ENCODE measurements at regions of chr11 and their contacts with region 1.

Region 1: DNA sequence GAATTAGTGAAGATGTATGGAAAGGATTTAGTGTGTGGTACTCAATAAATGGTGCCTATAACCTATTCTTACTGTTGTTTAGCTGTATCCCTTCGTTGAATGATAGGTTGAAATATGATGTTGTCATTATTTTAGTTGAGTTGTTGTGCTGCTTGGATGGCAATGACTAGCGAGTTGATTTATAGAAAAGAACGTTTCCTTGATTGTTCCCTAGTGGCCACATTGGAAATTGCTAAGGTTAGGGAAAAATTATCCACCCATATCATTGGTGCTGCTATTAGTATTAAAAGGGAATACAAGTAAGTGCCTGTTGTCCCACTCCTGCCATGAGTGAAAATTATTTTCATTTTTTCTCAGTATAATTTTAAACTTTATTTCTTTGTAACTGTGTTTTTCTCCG is 14.5 kb downstream of the EMSY start:
- DNase-seq: peak; percentile 30 to 41
- ATAC-seq: peak; percentile 24 to 70; a peak in 3 of 6 replicates
- H3K4me3 ChIP-seq: no peak overlapping the region
- H3K27ac ChIP-seq: no peak overlapping the region
- H3K4me1 ChIP-seq: peaks cover 10% of the 10 kb centered on the region; the same call in 1 of the 3 replicates
- CTCF ChIP-seq: peak; percentile 33
- EP300 ChIP-seq: no peak
- POLR2A ChIP-seq: no peak
- RAD21 ChIP-seq: no peak

Region 2: DNA sequence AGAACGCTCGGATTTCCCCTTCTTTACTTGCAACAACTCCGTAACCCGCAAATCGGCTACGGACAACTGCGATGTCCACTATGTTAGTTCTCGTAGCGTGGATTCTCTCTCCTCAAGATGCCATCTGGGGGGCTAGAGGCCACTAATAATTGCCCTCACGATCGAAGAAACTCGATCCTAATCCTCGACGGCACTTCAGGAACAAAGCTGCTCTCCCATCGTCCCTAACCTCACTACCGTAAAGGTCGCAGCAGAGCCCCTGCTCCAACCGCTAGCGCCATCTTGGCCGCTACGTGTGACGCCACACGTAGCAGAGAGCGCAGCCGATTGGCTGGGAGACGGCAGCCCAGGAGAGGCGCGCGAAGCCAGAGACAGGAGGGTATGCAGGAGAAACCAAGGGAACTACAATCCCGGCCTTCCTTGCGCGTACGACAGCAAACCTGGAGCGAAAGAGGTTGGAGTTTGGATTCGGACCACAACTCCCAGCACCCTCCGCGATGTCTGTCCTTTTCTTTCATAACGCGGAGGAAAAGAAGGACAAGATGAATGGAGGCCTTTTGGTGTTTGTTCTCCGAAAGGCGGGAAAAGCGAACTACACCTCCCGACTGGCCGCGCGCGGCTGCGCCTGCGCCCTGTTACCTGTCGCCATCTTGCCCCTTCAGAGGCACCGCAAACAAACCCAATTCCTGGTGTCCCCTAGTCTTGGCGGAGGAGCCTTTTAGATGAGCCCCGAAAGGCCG is 14.7 kb before region 1 on chr11 and contains the start of gene EMSY:
- CTCF ChIA-PET with region 1: interaction called, 15 read pairs
- POLR2A ChIA-PET with region 1: interaction called, 3 read pairs
- DNase-seq: peak; percentile 94 to 99
- ATAC-seq: peak; percentile 96 to 97
- H3K4me3 ChIP-seq: peak within 1 kb of the TSS; percentile 95
- H3K27ac ChIP-seq: peak within 1 kb of the TSS; percentile 90 to 91
- H3K4me1 ChIP-seq: peaks cover 12% of the 10 kb centered on the region; the same call in 2 of the 3 replicates
- CTCF ChIP-seq: no peak
- EP300 ChIP-seq: no peak
- POLR2A ChIP-seq: peak; percentile 97
- RAD21 ChIP-seq: no peak
- polyA plus RNA-seq, gene EMSY: 23.0 and 23.6 TPM in 2 replicates

Region 3: GRCh38 chr11:76602431-76602861 is 143.1 kb after region 1 on chr11:
- CTCF ChIA-PET with region 1: no interaction called
- POLR2A ChIA-PET with region 1: no interaction called
- DNase-seq: no peak
- ATAC-seq: no peak
- H3K4me3 ChIP-seq: no peak overlapping the region
- H3K27ac ChIP-seq: no peak overlapping the region
- H3K4me1 ChIP-seq: peaks cover 4% of the 10 kb centered on the region; the same call in 1 of the 3 replicates
- CTCF ChIP-seq: no peak
- EP300 ChIP-seq: no peak
- POLR2A ChIP-seq: no peak
- RAD21 ChIP-seq: no peak